OCI-LY7 (cell line): ENCODE measurements at regions of chr9 and their contacts with region 1.

Region 1: DNA sequence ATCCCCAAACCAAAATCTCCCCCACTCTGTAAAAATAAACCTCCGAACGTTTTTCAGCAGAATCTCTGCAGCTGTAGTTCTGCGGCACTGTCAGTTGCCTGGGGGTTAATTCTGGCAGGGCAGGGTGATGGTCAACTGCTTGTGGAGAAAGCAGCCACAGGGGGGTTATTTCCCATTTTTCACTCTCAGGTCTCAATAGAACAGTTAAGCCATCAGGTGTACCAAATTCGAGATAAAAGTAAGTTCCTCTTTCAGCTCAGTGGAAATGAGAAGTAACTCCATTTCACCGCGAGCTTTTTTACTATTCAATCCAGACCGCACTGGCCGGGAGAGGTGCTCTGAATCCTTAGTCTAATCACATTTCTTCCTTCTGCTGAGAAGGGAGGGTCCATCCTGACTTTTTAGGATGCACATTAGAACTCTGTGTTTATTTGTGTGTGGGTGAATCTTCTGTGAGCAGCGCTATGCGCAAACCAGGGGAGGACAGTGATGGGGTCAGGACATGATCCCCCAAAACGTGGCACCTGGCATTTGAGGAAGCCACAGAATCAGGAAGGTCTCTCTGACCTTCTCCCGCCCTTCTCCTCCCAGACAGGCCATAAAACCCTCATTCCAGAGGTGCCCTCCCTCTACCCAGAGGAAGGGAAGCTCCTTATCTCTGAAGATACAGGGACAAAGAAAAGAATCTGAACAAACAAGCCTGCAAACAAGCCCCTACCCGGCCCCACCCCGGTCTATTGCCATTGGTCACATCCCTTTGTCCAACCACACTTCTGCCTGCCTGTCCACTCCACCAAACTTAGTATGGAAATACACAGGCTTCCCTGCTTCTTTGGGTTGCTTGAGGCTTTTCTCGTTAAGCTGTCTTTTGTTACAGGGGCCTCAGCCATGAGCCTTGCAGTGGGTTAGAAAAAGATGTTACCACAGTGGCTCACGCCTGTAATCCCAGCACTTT is 229.0 kb downstream of the ROR2 start:
- DNase-seq: peak; percentile 91
- H3K4me3 ChIP-seq: peak overlapping the region; percentile 47
- H3K27ac ChIP-seq: peak overlapping the region; percentile 90
- H3K4me1 ChIP-seq: peaks cover 35% of the 10 kb centered on the region
- CTCF ChIP-seq: peak; percentile 69

Region 2: GRCh38 chr9:91966503-91966902 is 245.5 kb after region 1 on chr9:
- CTCF ChIA-PET with region 1: interaction called, 11 read pairs
- POLR2A ChIA-PET with region 1: no interaction called
- intact Hi-C with region 1: no loop called
- DNase-seq: no peak
- H3K4me3 ChIP-seq: no peak overlapping the region
- H3K27ac ChIP-seq: no peak overlapping the region
- H3K4me1 ChIP-seq: no peaks in the 10 kb centered on the region
- CTCF ChIP-seq: no peak